Body of pancreas (tissue), 4 donors: ENCODE measurements at regions of chr12 and their contacts with region 1.

Region 1: DNA sequence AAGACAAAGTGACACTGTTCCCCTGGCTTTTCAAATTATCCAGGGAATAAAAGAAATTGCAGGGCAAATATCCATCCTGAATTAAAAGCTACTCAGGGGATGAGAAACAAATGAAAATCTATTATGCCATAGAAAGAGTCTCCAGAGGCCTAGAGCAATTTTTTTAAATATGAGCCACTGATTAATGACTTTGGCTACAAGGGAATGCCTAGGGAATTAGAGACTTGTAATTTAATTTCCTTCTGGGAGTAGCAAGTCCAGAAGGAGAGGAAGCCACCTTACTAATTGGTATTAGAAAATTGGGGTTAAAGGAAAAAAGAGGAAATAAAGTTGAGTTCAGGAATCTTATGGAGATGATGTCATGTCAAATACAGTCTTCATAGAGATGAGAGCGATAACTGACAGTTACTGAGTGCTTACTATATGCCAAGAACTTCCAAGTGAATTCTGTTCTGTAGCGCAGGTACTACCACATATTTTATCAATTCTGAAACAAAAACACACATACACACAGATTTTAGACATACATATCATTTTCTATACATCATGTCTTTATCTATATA is 304.4 kb downstream of the DUSP6 start:
- DNase-seq: no peak
- ATAC-seq: no peak
- H3K4me3 ChIP-seq: no peak overlapping the region
- H3K27ac ChIP-seq: no peak overlapping the region
- H3K4me1 ChIP-seq: no peaks in the 10 kb centered on the region
- H3K27me3 ChIP-seq: no peaks in the 10 kb centered on the region
- CTCF ChIP-seq: no peak
- POLR2A ChIP-seq: no peak

Region 2: GRCh38 chr12:89461649-89462612 is 414.0 kb after region 1 on chr12:
- intact Hi-C with region 1: loop called (anchors 5 kb)
- DNase-seq: no peak
- ATAC-seq: peak; percentile 88
- H3K4me3 ChIP-seq: no peak overlapping the region
- H3K27ac ChIP-seq: no peak overlapping the region
- H3K4me1 ChIP-seq: peaks cover 6% of the 10 kb centered on the region
- H3K27me3 ChIP-seq: no peaks in the 10 kb centered on the region
- CTCF ChIP-seq: peak; percentile 16 to 81 (median 79)
- POLR2A ChIP-seq: no peak